ENCODE measurements at regions of chr3 and their contacts with region 1.

Region 1: GRCh38 chr3:185929192-185930151 is 8.3 kb downstream of the TRA2B start:
- DNase-seq: no peak
- ATAC-seq: peak; percentile 20
- H3K4me3 Mint-ChIP-seq: peak overlapping the region; percentile 97
- H3K27ac Mint-ChIP-seq: peak overlapping the region; percentile 84
- H3K4me1 Mint-ChIP-seq: peaks cover 92% of the 10 kb centered on the region
- H3K27me3 Mint-ChIP-seq: no peaks in the 10 kb centered on the region

Region 2: GRCh38 chr3:185824476-185825378 is 104.7 kb before region 1 on chr3 and contains the start of gene IGF2BP2:
- CTCF ChIA-PET with region 1: no interaction called
- POLR2A ChIA-PET with region 1: no interaction called
- intact Hi-C with region 1: loop called in 1 of 2 experiments (anchors 5 kb)
- DNase-seq: peak; percentile 76
- ATAC-seq: peak; percentile 84
- H3K4me3 Mint-ChIP-seq: peak within 1 kb of the TSS; percentile 74
- H3K27ac Mint-ChIP-seq: peak within 1 kb of the TSS; percentile 48
- H3K4me1 Mint-ChIP-seq: peaks cover 8% of the 10 kb centered on the region
- H3K27me3 Mint-ChIP-seq: peaks cover 59% of the 10 kb centered on the region
- total RNA-seq, gene IGF2BP2: 0.54 to 0.55 TPM

Region 3: GRCh38 chr3:185912929-185913901 is 16.3 kb before region 1 on chr3:
- CTCF ChIA-PET with region 1: interaction called, 13 read pairs
- POLR2A ChIA-PET with region 1: interaction called, 10 read pairs
- intact Hi-C with region 1: loop called in 1 of 2 experiments (anchors 2 kb)
- DNase-seq: no peak
- ATAC-seq: peak; percentile 27
- H3K4me3 Mint-ChIP-seq: no peak overlapping the region
- H3K27ac Mint-ChIP-seq: peak overlapping the region; percentile 55
- H3K4me1 Mint-ChIP-seq: peaks cover 1% of the 10 kb centered on the region
- H3K27me3 Mint-ChIP-seq: no peaks in the 10 kb centered on the region

Region 4: GRCh38 chr3:186790261-186790981 is 860.9 kb after region 1 on chr3:
- CTCF ChIA-PET with region 1: no interaction called
- POLR2A ChIA-PET with region 1: no interaction called
- intact Hi-C with region 1: loop called in 1 of 2 experiments (anchors 2 kb)
- DNase-seq: no peak
- ATAC-seq: peak; percentile 21
- H3K4me3 Mint-ChIP-seq: peak overlapping the region; percentile 19
- H3K27ac Mint-ChIP-seq: peak overlapping the region; percentile 77
- H3K4me1 Mint-ChIP-seq: peaks cover 42% of the 10 kb centered on the region
- H3K27me3 Mint-ChIP-seq: no peaks in the 10 kb centered on the region

Measured in activated CD4-positive, alpha-beta T cell treated with anti-CD3 and anti-CD28 coated beads for 36 hours (primary cell).